Heart left ventricle (tissue), 16 donors: ENCODE measurements at regions of chr11 and their contacts with region 1.

Region 1: DNA sequence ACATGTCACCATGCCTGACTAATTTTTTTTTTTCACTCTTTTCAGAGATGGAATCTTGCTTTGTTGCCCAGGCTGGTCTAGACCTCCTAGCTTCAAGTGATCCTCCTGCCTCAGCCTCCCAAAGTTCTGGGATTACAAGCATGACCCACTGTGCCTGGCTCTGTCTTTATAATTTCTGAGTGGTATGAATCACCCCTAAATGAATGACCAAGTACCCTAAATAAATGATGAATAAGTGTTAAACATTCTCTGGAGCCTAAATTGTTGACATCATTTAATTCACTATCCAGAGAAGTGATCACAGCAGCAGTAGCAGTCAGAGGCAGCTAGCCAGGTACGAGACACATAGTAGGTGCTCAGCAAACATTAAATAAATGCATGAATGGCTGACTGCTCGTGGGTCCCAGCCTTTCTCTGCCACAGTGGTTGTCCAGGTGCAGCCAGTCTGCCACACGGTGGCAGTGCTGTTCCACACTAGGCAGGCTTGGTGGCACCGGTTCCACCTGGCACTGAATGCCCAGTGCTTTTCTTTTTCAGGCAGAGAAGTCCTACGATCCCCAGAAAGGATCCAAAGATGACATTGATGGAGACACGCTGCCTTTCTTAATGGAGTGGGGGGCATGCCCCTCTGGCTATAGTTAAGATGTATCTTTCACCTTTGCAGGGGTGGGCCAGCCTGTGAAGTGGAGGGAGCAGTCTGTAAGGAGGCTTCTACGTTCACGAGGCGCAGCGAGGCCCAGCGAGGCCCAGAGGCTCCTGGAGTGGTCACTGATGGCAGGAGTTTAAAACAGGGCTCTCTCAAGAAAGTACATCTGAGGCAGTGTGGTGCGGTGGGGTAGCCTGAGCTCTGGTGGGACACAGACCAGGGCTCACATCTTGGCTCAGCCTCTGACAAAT is 8.7 kb upstream of the TTC12 start:
- DNase-seq: peak; percentile 58 to 85 (median 74)
- ATAC-seq: peak; percentile 88 to 93 (median 91)
- H3K4me3 ChIP-seq: no peak overlapping the region
- H3K27ac ChIP-seq: no peak overlapping the region
- H3K4me1 ChIP-seq: no peaks in the 10 kb centered on the region
- H3K27me3 ChIP-seq: no peaks in the 10 kb centered on the region
- CTCF ChIP-seq: peak; percentile 76 to 94 (median 89)
- POLR2A ChIP-seq: no peak

Region 2: GRCh38 chr11:113417428-113417827 is 111.7 kb after region 1 on chr11:
- intact Hi-C with region 1: no loop called
- DNase-seq: no peak
- ATAC-seq: no peak
- H3K4me3 ChIP-seq: no peak overlapping the region
- H3K27ac ChIP-seq: no peak overlapping the region
- H3K4me1 ChIP-seq: no peaks in the 10 kb centered on the region
- H3K27me3 ChIP-seq: no peaks in the 10 kb centered on the region
- CTCF ChIP-seq: no peak
- POLR2A ChIP-seq: no peak

Region 3: DNA sequence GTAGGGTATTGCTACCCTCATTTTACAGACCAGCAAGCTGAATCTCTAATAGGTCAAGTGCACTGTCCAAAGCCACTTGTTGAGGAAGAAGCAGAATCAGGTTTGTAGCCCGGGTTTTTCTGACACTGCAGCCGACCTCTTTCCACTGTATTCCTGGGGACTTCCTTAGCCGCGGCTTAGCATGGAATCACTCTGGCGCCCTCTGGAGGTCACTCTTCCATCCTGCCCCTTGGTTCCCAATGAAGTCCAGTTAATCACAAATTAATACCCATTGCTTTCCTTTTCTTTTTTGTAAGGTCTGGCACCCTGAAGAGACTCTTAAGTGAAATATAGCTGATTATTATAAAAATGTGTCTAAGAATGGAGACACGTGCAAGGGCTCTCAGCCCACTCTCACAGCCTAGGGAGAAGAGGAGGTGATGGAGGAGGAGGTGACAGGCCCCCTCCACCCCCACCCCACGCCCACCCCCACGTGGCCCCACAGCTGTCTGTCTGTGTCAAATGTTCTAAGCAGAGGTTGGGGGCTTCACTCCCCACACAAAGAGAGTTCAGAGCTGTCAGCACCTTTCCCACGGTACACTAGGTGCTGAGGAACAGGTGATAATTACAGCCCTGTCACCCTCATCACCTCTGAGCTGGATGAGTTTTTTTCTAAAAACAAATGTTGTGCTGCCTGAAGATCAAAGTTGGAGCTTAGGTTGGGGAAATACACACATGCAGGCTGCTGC is 227.2 kb after region 1 on chr11:
- intact Hi-C with region 1: loop called (anchors 1 to 5 kb)
- DNase-seq: peak; percentile 53 to 79 (median 75)
- ATAC-seq: peak; percentile 55 to 89 (median 74)
- H3K4me3 ChIP-seq: no peak overlapping the region
- H3K27ac ChIP-seq: no peak overlapping the region
- H3K4me1 ChIP-seq: peaks cover 0 to 8% (median 0%) of the 10 kb centered on the region in 12 donors
- H3K27me3 ChIP-seq: peaks cover 0 to 12% (median 0%) of the 10 kb centered on the region in 9 donors
- CTCF ChIP-seq: peak; percentile 79 to 92 (median 85)
- POLR2A ChIP-seq: no peak

Region 4: DNA sequence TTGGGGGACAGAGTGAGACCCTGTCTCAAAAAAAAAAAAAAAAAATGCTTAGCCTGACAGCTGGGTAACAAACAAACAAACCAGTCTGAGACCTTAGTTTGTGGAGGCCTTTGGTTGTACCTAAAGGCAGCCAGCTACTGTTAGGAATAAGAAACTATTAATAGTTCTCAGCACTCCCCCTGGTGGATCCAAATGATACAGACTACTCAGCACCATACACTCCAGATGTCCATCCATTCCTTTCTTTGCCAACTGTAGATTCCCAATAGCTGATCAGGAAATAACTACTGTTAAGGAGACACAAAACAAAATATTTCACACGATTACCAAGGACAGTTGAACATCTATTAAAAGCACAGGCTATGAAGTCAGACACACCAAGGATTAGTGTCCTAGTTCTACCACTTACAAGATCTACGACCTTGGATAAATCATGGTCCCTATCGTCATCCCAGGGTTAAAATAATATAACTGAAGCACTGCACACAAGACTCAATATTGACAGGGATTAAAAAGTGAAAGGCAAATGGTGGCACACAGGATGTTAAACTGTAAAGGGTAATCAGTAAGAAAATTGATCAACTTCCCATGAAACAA is 491.1 kb after region 1 on chr11:
- intact Hi-C with region 1: loop called in 4 of 10 experiments (anchors 5 to 10 kb)
- DNase-seq: no peak
- ATAC-seq: peak; percentile 84 to 92 (median 90)
- H3K4me3 ChIP-seq: no peak overlapping the region
- H3K27ac ChIP-seq: no peak overlapping the region
- H3K4me1 ChIP-seq: peaks cover 0 to 5% (median 0%) of the 10 kb centered on the region in 12 donors
- H3K27me3 ChIP-seq: no peaks in the 10 kb centered on the region
- CTCF ChIP-seq: peak; percentile 47 to 73 (median 59)
- POLR2A ChIP-seq: no peak